Activated CD4-positive, alpha-beta memory T cell treated with anti-CD3 and anti-CD28 coated beads for 36 hours (primary cell): ENCODE measurements at regions of chrX and their contacts with region 1.

Region 1: GRCh38 chrX:12814420-12814819 is 23.2 kb downstream of the PRPS2 start:
- DNase-seq: peak; percentile 44
- H3K4me3 Mint-ChIP-seq: no peak overlapping the region
- H3K27ac Mint-ChIP-seq: no peak overlapping the region
- H3K4me1 Mint-ChIP-seq: no peaks in the 10 kb centered on the region
- H3K27me3 Mint-ChIP-seq: no peaks in the 10 kb centered on the region

Region 2: GRCh38 chrX:12843668-12844279 is 29.4 kb after region 1 on chrX:
- CTCF ChIA-PET with region 1: no interaction called
- POLR2A ChIA-PET with region 1: no interaction called
- intact Hi-C with region 1: no loop called
- DNase-seq: no peak
- H3K4me3 Mint-ChIP-seq: peak overlapping the region; percentile 54
- H3K27ac Mint-ChIP-seq: peak overlapping the region; percentile 86
- H3K4me1 Mint-ChIP-seq: peaks cover 7% of the 10 kb centered on the region
- H3K27me3 Mint-ChIP-seq: no peaks in the 10 kb centered on the region

Region 3: DNA sequence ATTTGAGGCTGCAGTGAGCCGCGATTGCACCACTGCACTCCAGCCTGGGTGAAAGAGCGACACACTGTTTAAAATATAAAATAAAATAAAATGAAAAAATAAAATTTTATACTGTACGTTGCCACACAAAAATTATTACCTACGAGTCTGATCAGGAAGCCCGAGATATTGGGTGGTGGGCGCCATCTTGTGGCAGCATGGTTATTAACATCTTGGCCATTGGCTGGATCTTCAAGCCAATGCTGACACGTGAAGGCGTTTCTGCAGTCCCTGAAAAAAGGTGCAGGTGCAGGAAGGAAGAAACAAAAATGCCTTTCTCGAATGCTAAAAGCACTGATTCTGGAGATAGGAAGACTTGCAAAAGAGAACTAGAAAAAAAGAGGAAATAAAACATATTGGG is 87.1 kb after region 1 on chrX:
- CTCF ChIA-PET with region 1: interaction called, 13 read pairs
- POLR2A ChIA-PET with region 1: no interaction called
- intact Hi-C with region 1: loop called (anchors 1 kb)
- DNase-seq: peak; percentile 73
- H3K4me3 Mint-ChIP-seq: no peak overlapping the region
- H3K27ac Mint-ChIP-seq: no peak overlapping the region
- H3K4me1 Mint-ChIP-seq: peaks cover 2% of the 10 kb centered on the region
- H3K27me3 Mint-ChIP-seq: no peaks in the 10 kb centered on the region